B cell (primary cell): ENCODE measurements at regions of chr21 and their contacts with region 1.

Region 1: DNA sequence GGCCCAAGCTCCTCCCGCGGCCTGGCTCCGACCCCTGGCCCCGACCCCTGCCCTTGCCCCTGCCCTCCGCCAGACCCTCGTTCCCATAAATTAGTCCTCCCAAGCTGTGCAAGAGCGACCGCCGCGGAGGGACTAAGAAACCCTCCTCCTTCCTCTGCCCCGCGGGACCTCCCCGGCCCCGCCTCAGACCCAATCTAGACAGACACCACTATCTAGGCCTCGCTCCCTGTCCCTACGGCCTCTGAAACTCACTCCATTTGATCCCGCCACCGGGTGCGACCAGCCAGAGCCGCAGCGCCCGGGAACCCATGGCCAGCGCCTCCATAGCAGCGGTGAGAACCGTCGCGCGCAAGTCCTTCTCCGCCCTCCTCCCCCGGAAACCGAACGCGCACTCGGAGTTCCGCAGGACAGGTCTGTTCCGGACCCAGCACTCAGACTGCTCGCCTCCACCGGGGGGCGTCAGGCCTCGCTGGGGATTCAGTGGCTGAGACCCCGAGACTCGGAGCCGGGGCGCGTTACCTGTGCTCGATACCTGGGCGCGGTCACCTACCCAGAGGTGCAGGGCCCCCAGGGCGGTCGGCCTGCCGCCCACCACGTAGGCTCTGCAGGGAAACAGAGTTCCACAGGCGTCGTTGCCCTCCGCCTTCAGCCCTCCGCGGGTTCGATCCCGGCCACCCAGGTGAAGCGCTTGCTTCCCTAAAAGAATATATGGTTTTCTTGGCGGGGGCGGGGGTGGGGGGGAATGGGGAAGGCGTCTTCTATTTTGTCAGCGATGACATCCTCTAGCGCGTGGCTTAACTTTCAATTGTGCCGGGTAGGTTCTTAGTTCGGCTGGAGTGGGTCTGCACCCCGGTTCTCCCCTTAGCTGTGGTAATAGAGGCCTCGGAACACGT is at the start of gene MRPL39:
- DNase-seq: peak; percentile 91
- ATAC-seq: peak; percentile 89
- H3K4me3 ChIP-seq: peak within 1 kb of the TSS; percentile 71 to 91 (median 89)
- H3K4me3 Mint-ChIP-seq: peak within 1 kb of the TSS; percentile 99
- H3K27ac ChIP-seq: peak within 1 kb of the TSS; percentile 72 to 89
- H3K27ac Mint-ChIP-seq: peak within 1 kb of the TSS; percentile 99
- H3K4me1 ChIP-seq: peaks cover 28 to 30% of the 10 kb centered on the region in 2 donors
- H3K4me1 Mint-ChIP-seq: peaks cover 38% of the 10 kb centered on the region
- H3K27me3 ChIP-seq: no peaks in the 10 kb centered on the region
- H3K27me3 Mint-ChIP-seq: no peaks in the 10 kb centered on the region
- CTCF ChIP-seq: no peak
- total RNA-seq, gene MRPL39: 18.1 and 19.7 TPM in 2 replicates

Region 2: DNA sequence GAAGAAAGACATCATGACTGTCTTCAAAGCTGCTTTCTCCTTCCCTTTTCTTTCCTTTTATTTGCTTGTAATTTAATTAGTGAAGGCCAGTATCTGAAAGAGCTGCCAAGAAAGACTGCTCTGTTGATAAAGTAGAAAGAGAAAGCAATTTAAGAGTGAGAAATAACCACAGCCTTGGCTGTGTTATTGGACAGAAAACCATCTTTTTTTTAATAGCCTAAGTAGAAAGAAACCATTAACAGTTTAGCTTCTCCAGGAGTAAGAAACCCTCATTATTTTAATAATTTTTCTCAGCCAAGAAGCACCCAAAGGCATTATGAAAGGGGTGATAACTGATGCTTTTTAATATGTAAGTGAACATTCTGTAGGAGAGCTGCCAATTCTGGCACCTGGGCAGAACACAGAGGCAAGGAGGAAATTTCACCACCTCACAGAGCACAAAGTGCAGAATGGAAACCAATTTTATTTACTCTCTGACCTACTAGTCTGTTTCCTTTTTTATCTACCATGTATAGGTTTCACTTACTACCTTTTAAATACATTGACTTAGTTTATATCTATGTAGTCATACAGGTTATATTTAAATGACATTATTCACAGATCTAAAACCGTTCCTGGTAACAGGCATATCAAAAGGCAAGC is 703.3 kb before region 1 on chr21:
- CTCF ChIA-PET with region 1: no interaction called
- POLR2A ChIA-PET with region 1: no interaction called
- intact Hi-C with region 1: no loop called
- DNase-seq: no peak
- ATAC-seq: no peak
- H3K4me3 ChIP-seq: no peak overlapping the region
- H3K4me3 Mint-ChIP-seq: no peak overlapping the region
- H3K27ac ChIP-seq: no peak overlapping the region
- H3K27ac Mint-ChIP-seq: no peak overlapping the region
- H3K4me1 ChIP-seq: peaks cover 0 to 5% of the 10 kb centered on the region in 2 donors
- H3K4me1 Mint-ChIP-seq: peaks cover 13% of the 10 kb centered on the region
- H3K27me3 ChIP-seq: no peaks in the 10 kb centered on the region
- H3K27me3 Mint-ChIP-seq: no peaks in the 10 kb centered on the region
- CTCF ChIP-seq: no peak

Region 3: DNA sequence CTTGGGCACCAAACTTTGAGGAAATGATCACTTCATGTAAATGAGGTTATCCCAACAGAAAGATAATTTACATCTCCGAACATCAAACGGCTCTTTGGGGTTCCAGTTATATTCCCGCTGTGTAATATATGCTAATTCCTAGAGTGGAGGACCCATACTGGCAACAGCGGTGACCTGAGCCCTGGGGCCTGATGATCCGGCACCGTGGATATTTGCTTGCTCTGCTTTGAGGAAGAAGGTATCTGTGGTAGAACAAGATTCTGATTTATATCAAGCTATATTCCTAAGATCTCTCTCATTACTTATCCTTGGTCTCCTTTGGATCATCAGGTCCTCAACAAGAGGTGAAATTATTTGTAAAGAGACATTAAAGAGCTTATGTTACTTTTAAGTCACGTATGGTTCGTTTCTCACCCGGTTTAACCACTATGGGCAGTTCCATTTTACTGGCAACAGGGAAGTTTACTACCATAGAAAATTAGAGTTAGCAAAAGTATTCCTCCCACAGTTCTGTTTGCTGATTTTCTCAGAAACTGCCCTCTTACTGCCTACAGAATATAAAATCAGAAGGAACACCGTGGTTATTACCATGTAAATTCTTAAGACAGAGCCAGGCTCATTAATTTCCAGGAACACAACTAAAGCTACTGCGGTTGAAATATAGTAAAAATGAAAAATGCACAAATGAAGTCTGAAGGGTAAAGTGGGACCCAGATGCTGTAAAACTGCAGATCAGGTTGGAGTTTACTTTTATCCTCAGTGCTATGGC is 56.9 kb before region 1 on chr21:
- CTCF ChIA-PET with region 1: no interaction called
- POLR2A ChIA-PET with region 1: no interaction called
- intact Hi-C with region 1: no loop called
- DNase-seq: no peak
- ATAC-seq: no peak
- H3K4me3 ChIP-seq: no peak overlapping the region
- H3K4me3 Mint-ChIP-seq: no peak overlapping the region
- H3K27ac ChIP-seq: no peak overlapping the region
- H3K27ac Mint-ChIP-seq: no peak overlapping the region
- H3K4me1 ChIP-seq: no peaks in the 10 kb centered on the region
- H3K4me1 Mint-ChIP-seq: no peaks in the 10 kb centered on the region
- H3K27me3 ChIP-seq: no peaks in the 10 kb centered on the region
- H3K27me3 Mint-ChIP-seq: no peaks in the 10 kb centered on the region
- CTCF ChIP-seq: no peak

Region 4: DNA sequence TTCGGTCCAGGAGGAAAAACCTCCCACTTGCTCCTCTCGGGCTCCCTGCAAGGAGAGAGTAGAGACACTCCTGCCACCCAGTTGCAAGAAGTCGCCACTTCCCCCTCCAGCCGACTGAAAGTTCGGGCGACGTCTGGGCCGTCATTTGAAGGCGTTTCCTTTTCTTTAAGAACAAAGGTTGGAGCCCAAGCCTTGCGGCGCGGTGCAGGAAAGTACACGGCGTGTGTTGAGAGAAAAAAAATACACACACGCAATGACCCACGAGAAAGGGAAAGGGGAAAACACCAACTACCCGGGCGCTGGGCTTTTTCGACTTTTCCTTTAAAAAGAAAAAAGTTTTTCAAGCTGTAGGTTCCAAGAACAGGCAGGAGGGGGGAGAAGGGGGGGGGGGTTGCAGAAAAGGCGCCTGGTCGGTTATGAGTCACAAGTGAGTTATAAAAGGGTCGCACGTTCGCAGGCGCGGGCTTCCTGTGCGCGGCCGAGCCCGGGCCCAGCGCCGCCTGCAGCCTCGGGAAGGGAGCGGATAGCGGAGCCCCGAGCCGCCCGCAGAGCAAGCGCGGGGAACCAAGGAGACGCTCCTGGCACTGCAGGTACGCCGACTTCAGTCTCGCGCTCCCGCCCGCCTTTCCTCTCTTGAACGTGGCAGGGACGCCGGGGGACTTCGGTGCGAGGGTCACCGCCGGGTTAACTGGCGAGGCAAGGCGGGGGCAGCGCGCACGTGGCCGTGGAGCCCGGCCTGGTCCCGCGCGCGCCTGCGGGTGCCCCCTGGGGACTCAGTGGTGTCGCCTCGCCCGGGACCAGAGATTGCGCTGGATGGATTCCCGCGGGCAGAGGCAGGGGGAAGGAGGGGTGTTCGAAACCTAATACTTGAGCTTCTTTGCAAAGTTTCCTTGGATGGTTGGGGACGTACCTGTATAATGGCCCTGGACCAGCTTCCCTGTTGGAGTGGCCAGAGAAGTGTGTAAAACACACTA is 45.4 kb before region 1 on chr21:
- CTCF ChIA-PET with region 1: interaction called, 6 read pairs
- POLR2A ChIA-PET with region 1: no interaction called
- intact Hi-C with region 1: loop called (anchors 2 kb)
- DNase-seq: peak; percentile 80
- ATAC-seq: peak; percentile 69
- H3K4me3 ChIP-seq: peak overlapping the region; percentile 61 to 86 (median 70)
- H3K4me3 Mint-ChIP-seq: peak overlapping the region; percentile 100
- H3K27ac ChIP-seq: peak overlapping the region; percentile 78 to 83
- H3K27ac Mint-ChIP-seq: peak overlapping the region; percentile 98
- H3K4me1 ChIP-seq: peaks cover 34 to 42% of the 10 kb centered on the region in 2 donors
- H3K4me1 Mint-ChIP-seq: peaks cover 60% of the 10 kb centered on the region
- H3K27me3 ChIP-seq: no peaks in the 10 kb centered on the region
- H3K27me3 Mint-ChIP-seq: no peaks in the 10 kb centered on the region
- CTCF ChIP-seq: peak; percentile 3

Region 5: DNA sequence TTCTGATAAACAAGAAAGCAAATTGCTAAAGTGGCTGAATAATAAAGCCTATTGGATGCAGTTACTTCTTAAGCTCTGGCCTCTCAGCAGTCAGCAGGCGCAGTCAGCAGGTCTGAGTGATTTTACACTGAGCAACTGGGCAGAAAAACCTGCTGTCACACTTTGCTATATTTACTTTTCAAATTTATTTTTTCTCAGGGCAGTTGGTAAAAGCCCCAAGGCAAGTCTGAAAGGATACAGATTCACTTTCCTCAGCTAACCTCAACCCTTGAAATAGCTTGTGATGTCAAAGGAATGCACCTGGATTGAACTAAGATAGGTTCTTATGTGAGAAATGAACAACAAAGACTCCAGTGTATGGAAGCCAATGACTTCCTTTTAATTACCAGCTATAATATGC is 93.3 kb after region 1 on chr21:
- CTCF ChIA-PET with region 1: interaction called, 71 read pairs
- POLR2A ChIA-PET with region 1: no interaction called
- intact Hi-C with region 1: no loop called
- DNase-seq: no peak
- ATAC-seq: no peak
- H3K4me3 ChIP-seq: no peak overlapping the region
- H3K4me3 Mint-ChIP-seq: no peak overlapping the region
- H3K27ac ChIP-seq: no peak overlapping the region
- H3K27ac Mint-ChIP-seq: no peak overlapping the region
- H3K4me1 ChIP-seq: no peaks in the 10 kb centered on the region
- H3K4me1 Mint-ChIP-seq: no peaks in the 10 kb centered on the region
- H3K27me3 ChIP-seq: no peaks in the 10 kb centered on the region
- H3K27me3 Mint-ChIP-seq: no peaks in the 10 kb centered on the region
- CTCF ChIP-seq: no peak

Region 6: DNA sequence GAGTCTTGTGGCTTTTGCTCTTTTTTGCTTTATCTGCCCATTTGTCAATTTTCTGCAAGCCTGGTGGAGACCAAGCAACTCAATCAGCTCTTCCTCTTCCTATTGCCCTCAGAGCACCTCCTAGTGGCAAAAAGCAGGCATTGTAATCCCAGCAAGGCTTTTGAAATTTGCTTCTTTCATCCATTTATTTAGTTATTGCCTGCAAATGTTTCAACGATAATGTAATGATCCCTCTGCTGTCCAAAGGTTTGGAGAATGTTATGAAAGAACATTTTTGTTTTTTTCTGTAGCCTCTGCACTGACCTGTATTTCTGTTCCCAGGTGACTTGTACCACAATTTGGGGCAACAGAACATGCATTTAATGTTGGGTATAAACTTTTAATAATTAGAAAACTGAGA is 255.2 kb after region 1 on chr21:
- CTCF ChIA-PET with region 1: interaction called, 6 read pairs
- POLR2A ChIA-PET with region 1: no interaction called
- intact Hi-C with region 1: loop called (anchors 1 kb)
- DNase-seq: peak; percentile 44
- ATAC-seq: no peak
- H3K4me3 ChIP-seq: no peak overlapping the region
- H3K4me3 Mint-ChIP-seq: no peak overlapping the region
- H3K27ac ChIP-seq: no peak overlapping the region
- H3K27ac Mint-ChIP-seq: no peak overlapping the region
- H3K4me1 ChIP-seq: no peaks in the 10 kb centered on the region
- H3K4me1 Mint-ChIP-seq: no peaks in the 10 kb centered on the region
- H3K27me3 ChIP-seq: no peaks in the 10 kb centered on the region
- H3K27me3 Mint-ChIP-seq: no peaks in the 10 kb centered on the region
- CTCF ChIP-seq: peak; percentile 77

Region 7: GRCh38 chr21:26170471-26171257 is 563.3 kb after region 1 on chr21 and contains the start of gene APP:
- CTCF ChIA-PET with region 1: no interaction called
- POLR2A ChIA-PET with region 1: no interaction called
- intact Hi-C with region 1: loop called (anchors 2 kb)
- DNase-seq: peak; percentile 91
- ATAC-seq: peak; percentile 89
- H3K4me3 ChIP-seq: peak within 1 kb of the TSS; percentile 54 to 84 (median 82)
- H3K4me3 Mint-ChIP-seq: peak within 1 kb of the TSS; percentile 97
- H3K27ac ChIP-seq: peak within 1 kb of the TSS in 1 of 2 donors; percentile 74
- H3K27ac Mint-ChIP-seq: peak within 1 kb of the TSS; percentile 81
- H3K4me1 ChIP-seq: peaks cover 9 to 18% of the 10 kb centered on the region in 2 donors
- H3K4me1 Mint-ChIP-seq: peaks cover 15% of the 10 kb centered on the region
- H3K27me3 ChIP-seq: peaks cover 0 to 9% (median 2%) of the 10 kb centered on the region in 4 experiments
- H3K27me3 Mint-ChIP-seq: peaks cover 19% of the 10 kb centered on the region
- CTCF ChIP-seq: peak; percentile 96
- total RNA-seq, gene APP: 34.7 and 38.0 TPM in 2 replicates